ENCODE measurements at regions of chr2 and their contacts with region 1.

Region 1: GRCh38 chr2:16650287-16651249 is 15.1 kb downstream of the CYRIA start:
- DNase-seq: peak; percentile 61
- H3K4me3 Mint-ChIP-seq: peak overlapping the region; percentile 30
- H3K27ac Mint-ChIP-seq: peak overlapping the region; percentile 76
- H3K4me1 Mint-ChIP-seq: peaks cover 31% of the 10 kb centered on the region
- H3K27me3 Mint-ChIP-seq: no peaks in the 10 kb centered on the region
- CTCF ChIP-seq: no peak

Region 2: DNA sequence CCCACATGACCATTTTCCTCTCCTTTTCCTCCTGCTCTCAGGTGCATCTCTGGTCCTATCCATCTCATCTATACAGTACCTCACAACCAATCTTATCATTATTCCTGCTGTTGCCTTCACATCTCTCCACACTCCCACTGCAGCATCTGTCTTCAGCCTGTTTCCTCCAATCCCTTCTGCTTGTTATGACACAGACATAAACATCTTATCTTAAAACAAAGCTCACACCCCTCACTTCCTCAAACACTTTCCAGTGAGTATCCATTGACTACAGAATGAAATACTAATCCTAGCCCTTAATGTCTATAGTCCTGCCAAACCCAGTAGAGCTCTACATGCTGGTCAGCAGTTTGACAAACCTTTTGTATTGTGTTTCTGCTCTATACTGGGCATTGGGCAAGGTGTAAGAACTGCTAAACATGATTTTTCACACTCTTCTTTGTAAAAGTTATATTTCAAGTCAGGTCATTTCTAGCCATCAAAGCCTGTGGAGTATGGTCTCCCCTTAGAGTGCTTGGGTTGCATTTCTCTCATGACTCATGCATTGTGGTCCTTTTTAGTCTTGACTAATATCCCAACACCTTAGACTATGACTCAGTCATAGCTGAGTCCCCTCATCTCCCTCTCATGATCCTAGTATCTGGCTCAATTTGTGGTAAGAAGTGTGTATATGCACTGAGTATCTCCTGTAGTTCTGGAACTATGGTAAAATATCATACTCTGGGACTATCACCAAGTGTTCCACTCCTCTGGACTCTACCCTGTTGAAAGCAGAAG is 171.9 kb before region 1 on chr2:
- CTCF ChIA-PET with region 1: no interaction called
- POLR2A ChIA-PET with region 1: no interaction called
- intact Hi-C with region 1: no loop called
- DNase-seq: peak; percentile 46
- H3K4me3 Mint-ChIP-seq: no peak overlapping the region
- H3K27ac Mint-ChIP-seq: no peak overlapping the region
- H3K4me1 Mint-ChIP-seq: no peaks in the 10 kb centered on the region
- H3K27me3 Mint-ChIP-seq: no peaks in the 10 kb centered on the region
- CTCF ChIP-seq: no peak

Region 3: GRCh38 chr2:16739778-16740581 is 89.4 kb after region 1 on chr2:
- CTCF ChIA-PET with region 1: no interaction called
- POLR2A ChIA-PET with region 1: interaction called, 14 read pairs
- intact Hi-C with region 1: no loop called
- DNase-seq: peak; percentile 91
- H3K4me3 Mint-ChIP-seq: no peak overlapping the region
- H3K27ac Mint-ChIP-seq: peak overlapping the region; percentile 37
- H3K4me1 Mint-ChIP-seq: peaks cover 22% of the 10 kb centered on the region
- H3K27me3 Mint-ChIP-seq: no peaks in the 10 kb centered on the region
- CTCF ChIP-seq: no peak

Region 4: GRCh38 chr2:18047850-18048249 is 1397.3 kb after region 1 on chr2:
- CTCF ChIA-PET with region 1: no interaction called
- POLR2A ChIA-PET with region 1: no interaction called
- intact Hi-C with region 1: loop called (anchors 5 kb)
- DNase-seq: peak; percentile 93
- H3K4me3 Mint-ChIP-seq: peak overlapping the region; percentile 10
- H3K27ac Mint-ChIP-seq: peak overlapping the region; percentile 1
- H3K4me1 Mint-ChIP-seq: peaks cover 32% of the 10 kb centered on the region
- H3K27me3 Mint-ChIP-seq: no peaks in the 10 kb centered on the region
- CTCF ChIP-seq: no peak